ENCODE measurements at regions of chr9 and their contacts with region 1.

Region 1: GRCh38 chr9:21789541-21790037 is 12.8 kb upstream of the MTAP start:
- DNase-seq: peak; percentile 32
- ATAC-seq: peak; percentile 94

Region 2: DNA sequence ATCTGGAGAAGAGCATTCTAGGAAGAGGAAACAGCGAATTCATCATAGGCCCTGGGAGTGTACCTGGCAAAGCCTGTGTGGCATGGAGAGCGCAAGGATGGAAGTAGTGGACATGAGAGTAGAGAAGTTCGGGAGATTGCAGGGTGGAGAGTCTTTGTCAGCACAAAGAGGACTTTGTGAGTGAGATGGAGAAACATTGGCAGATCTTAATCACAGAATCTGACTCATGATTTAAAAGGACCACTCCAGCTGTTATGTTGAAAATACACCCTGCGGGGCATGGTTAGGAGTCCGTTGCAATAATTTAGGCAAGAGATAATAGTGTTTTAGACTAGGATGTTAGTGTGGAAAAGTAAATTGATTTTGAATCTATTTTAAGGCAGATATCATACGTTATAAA is 875.0 kb before region 1 on chr9:
- intact Hi-C with region 1: no loop called
- DNase-seq: no peak
- ATAC-seq: no peak

Region 3: GRCh38 chr9:21252721-21253547 is 536.7 kb before region 1 on chr9:
- intact Hi-C with region 1: loop called in 1 of 2 experiments (anchors 10 kb)
- DNase-seq: peak; percentile 42
- ATAC-seq: peak in 1 of 2 donors; percentile 80

Region 4: DNA sequence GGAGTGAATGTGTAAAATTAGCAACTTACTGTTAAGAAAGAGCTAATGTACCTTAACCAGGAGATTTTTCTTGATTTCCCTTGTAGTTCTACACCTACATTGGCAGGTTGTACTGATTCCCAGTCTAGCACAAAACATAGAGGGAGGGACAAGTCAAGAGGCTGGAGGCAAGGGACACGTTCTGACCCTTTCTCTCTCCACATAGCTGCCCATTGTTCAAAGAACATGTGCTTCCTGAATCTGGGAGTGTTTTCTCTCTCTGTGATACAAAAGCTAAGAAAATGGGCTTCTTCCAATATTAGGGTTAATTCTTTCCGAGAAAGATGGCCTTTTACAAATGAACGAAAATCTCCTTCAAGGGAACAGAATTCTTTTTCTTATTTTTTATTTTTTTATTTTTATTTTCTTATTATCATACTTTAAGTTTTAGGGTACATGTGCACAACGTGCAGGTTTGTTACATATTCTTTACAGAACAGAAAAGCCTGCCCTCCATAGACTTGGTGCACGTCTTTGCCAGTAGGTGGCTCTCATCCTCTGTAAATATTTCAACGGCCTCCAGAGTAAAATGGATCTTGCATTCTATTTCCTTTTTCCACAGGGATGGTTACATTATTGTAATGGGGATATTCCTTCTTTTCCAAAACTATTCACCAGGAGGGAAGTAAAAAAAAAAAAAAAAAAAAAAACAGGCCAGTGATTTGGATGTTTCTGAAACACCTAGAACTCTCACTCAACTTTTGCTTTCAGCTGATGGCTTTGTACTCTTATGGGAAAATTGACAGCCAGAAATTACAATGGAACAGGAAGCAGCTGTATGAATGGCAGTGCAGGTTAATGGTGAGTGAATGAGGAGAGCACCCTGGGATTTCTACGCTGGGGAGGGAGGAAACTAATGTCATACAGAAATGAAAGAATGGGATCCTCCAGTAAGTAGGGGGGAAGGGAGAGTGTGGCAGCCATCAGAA is 471.3 kb before region 1 on chr9:
- intact Hi-C with region 1: loop called (anchors 2 to 5 kb)
- DNase-seq: peak; percentile 28
- ATAC-seq: peak; percentile 75 to 78

Region 5: GRCh38 chr9:21326526-21327139 is 463.0 kb before region 1 on chr9:
- intact Hi-C with region 1: loop called in 1 of 2 experiments (anchors 5 kb)
- DNase-seq: no peak
- ATAC-seq: peak; percentile 61 to 75

Measured in left cardiac atrium (tissue), 4 donors.